Gastrocnemius medialis (tissue), 4 donors: ENCODE measurements at regions of chr7 and their contacts with region 1.

Region 1: GRCh38 chr7:151448261-151449252 is 8.6 kb upstream of the CRYGN start:
- DNase-seq: peak; percentile 32 to 50
- ATAC-seq: peak; percentile 86 to 92
- H3K4me3 ChIP-seq: peak overlapping the region; percentile 61 to 82 (median 66)
- H3K27ac ChIP-seq: peak overlapping the region in 1 of 4 donors; percentile 44
- H3K4me1 ChIP-seq: peaks cover 0 to 7% of the 10 kb centered on the region in 2 donors
- H3K27me3 ChIP-seq: no peaks in the 10 kb centered on the region
- CTCF ChIP-seq: peak; percentile 35 to 88 (median 82)
- POLR2A ChIP-seq: no peak

Region 2: GRCh38 chr7:151315038-151315655 is 133.4 kb before region 1 on chr7:
- in situ Hi-C with region 1: no loop called
- intact Hi-C with region 1: loop called (anchors 5 kb)
- DNase-seq: peak; percentile 31 to 59
- ATAC-seq: peak; percentile 65 to 72
- H3K4me3 ChIP-seq: no peak overlapping the region
- H3K27ac ChIP-seq: no peak overlapping the region
- H3K4me1 ChIP-seq: peaks cover 6% of the 10 kb centered on the region in 2 donors
- H3K27me3 ChIP-seq: no peaks in the 10 kb centered on the region
- CTCF ChIP-seq: peak; percentile 60 to 83 (median 80)
- POLR2A ChIP-seq: no peak

Region 3: GRCh38 chr7:151368136-151368571 is 80.4 kb before region 1 on chr7:
- in situ Hi-C with region 1: loop called (anchors 5 kb)
- intact Hi-C with region 1: loop called (anchors 1 kb)
- DNase-seq: peak; percentile 49 to 77
- ATAC-seq: peak; percentile 82 to 96
- H3K4me3 ChIP-seq: no peak overlapping the region
- H3K27ac ChIP-seq: no peak overlapping the region
- H3K4me1 ChIP-seq: peaks cover 0 to 3% of the 10 kb centered on the region in 2 donors
- H3K27me3 ChIP-seq: no peaks in the 10 kb centered on the region
- CTCF ChIP-seq: peak; percentile 86 to 95 (median 95)
- POLR2A ChIP-seq: no peak